GM12878 (cell line): ENCODE measurements at regions of chr11 and their contacts with region 1.

Region 1: GRCh38 chr11:5703741-5704536 is 14.3 kb downstream of the TRIM22 start:
- DNase-seq: no peak
- ATAC-seq: peak; percentile 77
- H3K4me3 ChIP-seq: no peak overlapping the region
- H3K27ac ChIP-seq: no peak overlapping the region; the same call in 1 of the 2 replicates
- H3K4me1 ChIP-seq: peaks cover 3% of the 10 kb centered on the region; the same call in 1 of the 2 replicates
- H3K27me3 ChIP-seq: no peaks in the 10 kb centered on the region
- CTCF ChIP-seq: no peak
- EP300 ChIP-seq: no peak
- POLR2A ChIP-seq: no peak
- RAD21 ChIP-seq: no peak

Region 2: DNA sequence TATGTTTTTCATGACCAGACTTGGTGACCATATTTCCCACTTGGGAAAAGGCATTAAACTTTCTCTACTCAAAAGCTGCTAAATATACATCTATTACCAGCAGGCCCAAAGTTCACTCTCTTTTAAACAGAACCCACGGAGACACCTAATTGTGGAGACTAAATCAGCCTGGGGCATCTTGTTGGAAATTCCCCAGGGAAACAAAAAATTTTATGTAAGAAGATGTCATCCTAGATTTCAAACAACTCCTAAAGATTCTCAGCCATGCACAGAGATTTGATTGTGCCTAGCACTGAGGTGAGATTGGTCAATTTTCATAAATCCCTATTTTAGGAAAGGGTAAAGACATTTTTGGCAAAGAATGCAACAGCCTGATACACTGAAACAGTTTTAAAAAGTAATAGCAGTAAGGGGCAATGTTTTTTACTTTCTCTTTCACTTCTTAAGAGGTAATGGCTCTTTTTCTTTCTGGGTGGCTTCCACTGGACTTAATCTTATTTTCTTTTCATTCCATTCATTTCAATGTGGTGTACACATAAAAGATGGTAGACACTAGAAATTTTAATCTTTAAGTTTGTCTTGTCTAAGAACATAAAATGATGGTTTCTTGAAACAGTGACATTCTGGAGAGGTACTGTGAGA is 114.4 kb after region 1 on chr11:
- CTCF ChIA-PET with region 1: no interaction called
- POLR2A ChIA-PET with region 1: interaction called, 3 read pairs
- RAD21 ChIA-PET with region 1: no interaction called
- SMC1A ChIA-PET with region 1: no interaction called
- in situ Hi-C with region 1: no loop called
- intact Hi-C with region 1: loop called (anchors 5 kb)
- DNase-seq: no peak
- ATAC-seq: peak; percentile 72
- H3K4me3 ChIP-seq: no peak overlapping the region
- H3K27ac ChIP-seq: no peak overlapping the region; the same call in 1 of the 2 replicates
- H3K4me1 ChIP-seq: no peaks in the 10 kb centered on the region
- H3K27me3 ChIP-seq: no peaks in the 10 kb centered on the region
- CTCF ChIP-seq: no peak
- EP300 ChIP-seq: no peak
- POLR2A ChIP-seq: no peak
- RAD21 ChIP-seq: no peak

Region 3: DNA sequence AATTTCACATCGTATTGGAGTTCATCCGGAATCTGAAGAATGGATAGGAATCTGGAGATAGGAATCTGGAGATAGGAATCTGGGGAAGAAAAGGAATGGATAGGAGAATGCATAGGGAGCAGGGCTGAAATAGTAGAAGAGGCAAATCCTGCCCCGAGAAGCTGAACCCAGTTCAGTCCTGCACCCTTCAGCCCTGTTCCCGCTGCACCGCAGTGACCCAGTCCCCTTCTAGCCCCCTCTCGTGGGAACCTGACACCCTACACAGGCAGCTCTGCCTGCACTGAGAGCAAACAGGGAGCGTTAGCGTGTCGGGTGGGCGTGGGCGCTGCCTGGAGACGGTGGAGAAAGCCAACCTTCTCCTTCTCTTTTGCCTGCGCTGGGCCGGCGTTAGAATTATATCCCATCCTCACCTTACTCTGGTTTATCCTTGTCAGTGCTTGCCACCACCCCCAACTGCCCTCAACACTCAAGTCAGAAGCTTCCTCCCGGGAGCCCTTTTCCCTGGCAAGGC is 554.7 kb after region 1 on chr11:
- CTCF ChIA-PET with region 1: no interaction called
- POLR2A ChIA-PET with region 1: no interaction called
- RAD21 ChIA-PET with region 1: no interaction called
- SMC1A ChIA-PET with region 1: no interaction called
- in situ Hi-C with region 1: no loop called
- intact Hi-C with region 1: no loop called
- DNase-seq: no peak
- ATAC-seq: no peak
- H3K4me3 ChIP-seq: no peak overlapping the region
- H3K27ac ChIP-seq: no peak overlapping the region
- H3K4me1 ChIP-seq: no peaks in the 10 kb centered on the region
- H3K27me3 ChIP-seq: peaks cover 10 to 19% of the 10 kb centered on the region in 2 experiments
- CTCF ChIP-seq: no peak
- EP300 ChIP-seq: no peak
- POLR2A ChIP-seq: no peak
- RAD21 ChIP-seq: no peak